GM12878 (cell line): ENCODE measurements at regions of chr11 and their contacts with region 1.

Region 1: GRCh38 chr11:57800444-57801182 is 39.0 kb downstream of the CTNND1 start:
- DNase-seq: peak; percentile 56
- ATAC-seq: peak; percentile 95
- H3K4me3 ChIP-seq: no peak overlapping the region
- H3K27ac ChIP-seq: no peak overlapping the region
- H3K4me1 ChIP-seq: no peaks in the 10 kb centered on the region; the same call in 1 of the 2 replicates
- H3K27me3 ChIP-seq: no peaks in the 10 kb centered on the region
- CTCF ChIP-seq: peak; percentile 75 to 92 (median 83)
- EP300 ChIP-seq: no peak
- POLR2A ChIP-seq: no peak
- RAD21 ChIP-seq: peak; percentile 93

Region 2: GRCh38 chr11:57667736-57668435 is 132.7 kb before region 1 on chr11 and contains the start of gene ZDHHC5:
- CTCF ChIA-PET with region 1: interaction called, 31 read pairs
- POLR2A ChIA-PET with region 1: interaction called, 3 read pairs
- RAD21 ChIA-PET with region 1: interaction called, 22 read pairs
- SMC1A ChIA-PET with region 1: interaction called, 16 read pairs
- in situ Hi-C with region 1: loop called (anchors 5 kb)
- intact Hi-C with region 1: no loop called
- DNase-seq: peak; percentile 99
- ATAC-seq: peak; percentile 91
- H3K4me3 ChIP-seq: peak within 1 kb of the TSS; percentile 90
- H3K27ac ChIP-seq: peak within 1 kb of the TSS; percentile 99
- H3K4me1 ChIP-seq: peaks cover 7% of the 10 kb centered on the region
- H3K27me3 ChIP-seq: no peaks in the 10 kb centered on the region
- CTCF ChIP-seq: peak; percentile 25 to 37 (median 34); a peak in 4 of 6 replicates
- EP300 ChIP-seq: no peak
- POLR2A ChIP-seq: peak; percentile 98
- RAD21 ChIP-seq: no peak
- polyA plus RNA-seq, gene ZDHHC5: 3.9 to 7.3 TPM

Region 3: GRCh38 chr11:57712256-57713150 is 88.1 kb before region 1 on chr11 and contains the start of gene TMX2:
- CTCF ChIA-PET with region 1: interaction called, 28 read pairs
- POLR2A ChIA-PET with region 1: interaction called, 8 read pairs
- RAD21 ChIA-PET with region 1: interaction called, 25 read pairs
- SMC1A ChIA-PET with region 1: interaction called, 27 read pairs
- in situ Hi-C with region 1: no loop called
- intact Hi-C with region 1: no loop called
- DNase-seq: peak; percentile 99
- ATAC-seq: peak; percentile 95
- H3K4me3 ChIP-seq: peak within 1 kb of the TSS; percentile 97
- H3K27ac ChIP-seq: peak within 1 kb of the TSS; percentile 86
- H3K4me1 ChIP-seq: peaks cover 4% of the 10 kb centered on the region
- H3K27me3 ChIP-seq: no peaks in the 10 kb centered on the region
- CTCF ChIP-seq: no peak
- EP300 ChIP-seq: no peak
- POLR2A ChIP-seq: peak; percentile 96
- RAD21 ChIP-seq: no peak
- polyA plus RNA-seq, gene TMX2: 107 to 128 TPM

Region 4: DNA sequence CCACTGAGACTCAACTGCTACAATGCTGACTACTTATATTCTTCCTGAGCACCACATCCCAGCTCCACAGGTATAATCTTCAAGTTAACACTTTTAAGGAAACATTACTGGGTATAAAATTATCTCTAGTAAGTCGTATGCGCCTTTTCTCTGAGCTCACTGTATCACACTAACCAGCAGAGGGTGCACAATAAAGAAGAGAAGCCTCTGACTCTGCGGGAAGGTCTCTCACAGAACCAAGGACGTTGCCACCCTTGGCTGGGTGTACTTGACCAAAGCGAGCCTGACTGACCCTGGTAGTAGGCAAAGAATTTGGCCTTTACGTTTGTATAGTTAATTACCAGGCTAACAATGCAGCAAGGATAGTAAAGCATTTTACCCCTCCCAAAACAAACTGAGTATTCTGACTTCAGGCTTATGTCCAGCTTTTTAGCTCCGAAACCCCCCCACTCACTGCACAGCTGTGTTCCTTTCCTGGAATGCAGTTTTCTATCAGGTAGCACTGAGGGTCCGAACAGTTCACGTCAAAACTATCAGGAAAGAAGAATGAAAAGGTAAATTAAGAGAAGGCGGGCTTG is 48.8 kb before region 1 on chr11 and contains the start of gene BTBD18:
- CTCF ChIA-PET with region 1: interaction called, 227 read pairs
- POLR2A ChIA-PET with region 1: interaction called, 5 read pairs
- RAD21 ChIA-PET with region 1: interaction called, 141 read pairs
- SMC1A ChIA-PET with region 1: interaction called, 143 read pairs
- in situ Hi-C with region 1: no loop called
- intact Hi-C with region 1: loop called (anchors 1 kb)
- DNase-seq: no peak
- ATAC-seq: peak; percentile 93
- H3K4me3 ChIP-seq: no peak within 1 kb of the TSS
- H3K27ac ChIP-seq: no peak within 1 kb of the TSS
- H3K4me1 ChIP-seq: no peaks in the 10 kb centered on the region
- H3K27me3 ChIP-seq: no peaks in the 10 kb centered on the region
- CTCF ChIP-seq: peak; percentile 38 to 50 (median 50); a peak in 5 of 6 replicates
- EP300 ChIP-seq: no peak
- POLR2A ChIP-seq: no peak
- RAD21 ChIP-seq: peak; percentile 63
- polyA plus RNA-seq, gene BTBD18: 0.05 to 0.11 TPM

Region 5: GRCh38 chr11:57778318-57779037 is 22.1 kb before region 1 on chr11:
- CTCF ChIA-PET with region 1: interaction called, 69 read pairs
- POLR2A ChIA-PET with region 1: no interaction called
- RAD21 ChIA-PET with region 1: interaction called, 9 read pairs
- SMC1A ChIA-PET with region 1: interaction called, 10 read pairs
- in situ Hi-C with region 1: no loop called
- intact Hi-C with region 1: no loop called
- DNase-seq: no peak
- ATAC-seq: peak; percentile 31
- H3K4me3 ChIP-seq: 0 out of 2 replicates have a peak overlapping the region, but pooled peaks have one; percentile 24
- H3K27ac ChIP-seq: no peak overlapping the region
- H3K4me1 ChIP-seq: peaks cover 13% of the 10 kb centered on the region
- H3K27me3 ChIP-seq: no peaks in the 10 kb centered on the region
- CTCF ChIP-seq: no peak
- EP300 ChIP-seq: no peak
- POLR2A ChIP-seq: no peak
- RAD21 ChIP-seq: no peak

Region 6: DNA sequence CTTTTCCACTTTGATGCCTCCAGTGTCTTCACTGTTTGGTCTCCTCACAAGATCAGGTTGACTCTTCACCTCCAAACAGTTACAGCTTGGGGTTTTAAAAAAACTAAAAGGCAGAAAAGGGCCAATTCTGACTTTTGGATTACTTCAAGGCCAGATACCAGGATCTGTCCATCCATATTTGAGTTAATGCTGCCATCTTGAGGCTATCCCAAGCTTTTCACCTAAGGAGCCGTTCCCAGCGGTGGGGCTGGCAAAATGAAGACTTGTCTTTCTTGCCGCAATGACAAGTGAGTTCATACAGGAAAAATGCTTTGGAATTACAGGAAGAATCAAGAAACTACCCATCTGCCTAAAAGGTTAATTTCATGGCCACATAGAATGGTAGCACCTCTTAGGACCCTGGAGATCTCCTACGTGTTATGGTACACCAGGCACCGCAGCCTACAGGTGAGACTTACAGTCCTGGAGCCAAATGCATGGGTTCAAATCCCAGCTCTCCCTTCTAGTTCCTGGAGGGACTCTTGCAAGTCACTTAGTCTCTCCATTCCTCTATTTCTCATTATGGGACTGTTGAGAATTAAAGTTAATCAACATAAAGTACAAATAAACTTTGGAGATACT is 713.2 kb after region 1 on chr11:
- CTCF ChIA-PET with region 1: interaction called, 18 read pairs
- POLR2A ChIA-PET with region 1: no interaction called
- RAD21 ChIA-PET with region 1: interaction called, 27 read pairs
- SMC1A ChIA-PET with region 1: interaction called, 20 read pairs
- in situ Hi-C with region 1: loop called (anchors 25 kb)
- intact Hi-C with region 1: loop called (anchors 5 kb)
- DNase-seq: no peak
- ATAC-seq: peak; percentile 84
- H3K4me3 ChIP-seq: no peak overlapping the region
- H3K27ac ChIP-seq: no peak overlapping the region
- H3K4me1 ChIP-seq: no peaks in the 10 kb centered on the region
- H3K27me3 ChIP-seq: no peaks in the 10 kb centered on the region
- CTCF ChIP-seq: peak; percentile 46 to 68 (median 62); a peak in 5 of 6 replicates
- EP300 ChIP-seq: no peak
- POLR2A ChIP-seq: no peak
- RAD21 ChIP-seq: peak; percentile 89